Calu3 (cell line): ENCODE measurements at regions of chr1 and their contacts with region 1.

Region 1: DNA sequence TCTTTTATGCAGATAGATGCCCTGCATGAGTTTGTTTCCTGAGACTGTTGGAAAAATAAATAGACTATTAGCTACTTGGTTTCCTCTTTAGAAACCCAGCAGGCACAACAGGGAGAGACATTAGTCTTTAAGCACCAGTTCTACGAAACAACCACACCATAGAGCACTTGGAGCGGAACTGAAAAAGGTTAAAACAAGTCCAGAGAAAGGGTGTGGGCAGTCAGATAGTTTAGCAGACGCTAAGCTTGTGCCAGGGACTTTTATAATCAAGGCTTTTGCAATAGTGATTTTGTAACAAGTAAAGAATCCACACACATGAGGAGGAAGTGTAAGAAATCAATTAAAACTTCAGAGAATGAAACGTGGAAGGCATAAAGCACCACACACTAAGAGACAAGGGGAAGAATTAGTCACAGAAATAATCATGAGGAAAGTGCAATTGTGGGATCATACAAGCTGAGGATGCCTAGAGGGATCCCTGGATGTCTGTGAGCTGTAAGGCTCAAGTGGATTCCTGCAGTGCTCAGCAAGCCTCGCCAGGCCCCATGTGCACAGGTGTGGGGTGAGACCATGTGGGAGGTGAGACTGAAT is 37.8 kb upstream of the TLR5 start:
- DNase-seq: peak; percentile 57
- H3K4me3 Mint-ChIP-seq: peak overlapping the region; percentile 25
- H3K27ac Mint-ChIP-seq: peak overlapping the region; percentile 91
- H3K4me1 Mint-ChIP-seq: peaks cover 57% of the 10 kb centered on the region
- H3K27me3 Mint-ChIP-seq: no peaks in the 10 kb centered on the region
- CTCF ChIP-seq: no peak

Region 2: GRCh38 chr1:223142795-223143536 is 37.9 kb before region 1 on chr1 and contains the start of gene TLR5:
- CTCF ChIA-PET with region 1: interaction called, 10 read pairs
- intact Hi-C with region 1: loop called (anchors 2 kb)
- DNase-seq: peak; percentile 96
- H3K4me3 Mint-ChIP-seq: peak within 1 kb of the TSS; percentile 75
- H3K27ac Mint-ChIP-seq: peak within 1 kb of the TSS; percentile 85
- H3K4me1 Mint-ChIP-seq: peaks cover 49% of the 10 kb centered on the region
- H3K27me3 Mint-ChIP-seq: no peaks in the 10 kb centered on the region
- CTCF ChIP-seq: peak; percentile 85
- total RNA-seq, gene TLR5: 11.7 and 17.3 TPM in 2 replicates

Region 3: DNA sequence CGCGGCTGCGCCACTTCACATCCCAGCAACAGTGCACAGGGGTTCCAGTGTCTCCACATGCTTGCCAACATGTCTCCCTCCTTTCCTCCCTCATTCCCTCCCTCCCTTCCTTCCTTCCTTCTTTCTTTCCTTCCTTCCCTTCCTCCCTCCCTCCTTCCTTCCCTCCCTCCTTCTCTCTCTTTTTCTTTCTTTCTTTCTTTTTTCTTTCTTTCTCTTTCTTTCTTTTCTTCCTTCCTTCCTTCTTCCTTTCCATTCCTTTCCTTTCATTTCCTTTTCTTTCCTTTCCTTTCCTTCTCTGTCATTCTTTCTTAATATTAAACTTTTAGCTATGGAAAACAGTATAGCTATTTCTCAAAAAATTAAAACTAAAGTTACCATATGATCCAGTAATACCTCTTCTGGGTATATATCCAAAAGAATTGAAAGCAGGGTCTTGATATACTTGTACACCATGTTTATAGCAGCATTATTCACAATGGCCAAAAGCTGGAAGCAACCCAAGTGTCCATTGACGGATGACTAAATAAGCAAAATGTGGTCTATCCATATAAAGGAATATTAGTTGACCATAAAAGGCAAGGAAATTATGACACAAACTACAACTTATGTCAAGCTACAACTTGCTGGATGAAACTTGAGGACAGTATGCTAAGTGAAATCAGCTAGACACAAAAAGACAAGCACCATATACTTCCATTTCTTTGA is 17.2 kb after region 1 on chr1:
- CTCF ChIA-PET with region 1: interaction called, 10 read pairs
- intact Hi-C with region 1: no loop called
- DNase-seq: no peak
- H3K4me3 Mint-ChIP-seq: no peak overlapping the region
- H3K27ac Mint-ChIP-seq: no peak overlapping the region
- H3K4me1 Mint-ChIP-seq: peaks cover 30% of the 10 kb centered on the region
- H3K27me3 Mint-ChIP-seq: no peaks in the 10 kb centered on the region
- CTCF ChIP-seq: no peak

Region 4: GRCh38 chr1:223363856-223364684 is 183.2 kb after region 1 on chr1 and contains the start of gene SUSD4:
- CTCF ChIA-PET with region 1: interaction called, 4 read pairs
- intact Hi-C with region 1: loop called (anchors 5 kb)
- DNase-seq: peak; percentile 81
- H3K4me3 Mint-ChIP-seq: peak within 1 kb of the TSS; percentile 74
- H3K27ac Mint-ChIP-seq: no peak within 1 kb of the TSS
- H3K4me1 Mint-ChIP-seq: peaks cover 14% of the 10 kb centered on the region
- H3K27me3 Mint-ChIP-seq: peaks cover 77% of the 10 kb centered on the region
- CTCF ChIP-seq: no peak
- total RNA-seq, gene SUSD4: 7.2 and 9.7 TPM in 2 replicates